ENCODE measurements at regions of chrX and their contacts with region 1.

Region 1: GRCh38 chrX:118495061-118495921 is at the start of gene DOCK11:
- DNase-seq: peak; percentile 48 to 92 (median 80)
- ATAC-seq: peak; percentile 69
- H3K4me3 ChIP-seq: peak within 1 kb of the TSS; percentile 71 to 75
- H3K4me3 Mint-ChIP-seq: peak within 1 kb of the TSS; percentile 98
- H3K27ac ChIP-seq: peak within 1 kb of the TSS; percentile 82
- H3K27ac Mint-ChIP-seq: peak within 1 kb of the TSS; percentile 99
- H3K4me1 ChIP-seq: peaks cover 31% of the 10 kb centered on the region
- H3K4me1 Mint-ChIP-seq: peaks cover 26% of the 10 kb centered on the region
- H3K27me3 ChIP-seq: no peaks in the 10 kb centered on the region
- H3K27me3 Mint-ChIP-seq: no peaks in the 10 kb centered on the region
- CTCF ChIP-seq: no peak
- total RNA-seq, gene DOCK11: 52.8 to 57.9 TPM

Region 2: GRCh38 chrX:118520216-118521206 is 25.2 kb after region 1 on chrX:
- CTCF ChIA-PET with region 1: interaction called, 4 read pairs
- POLR2A ChIA-PET with region 1: interaction called, 3 read pairs
- intact Hi-C with region 1: loop called in 1 of 2 experiments (anchors 2 kb)
- DNase-seq: no peak
- ATAC-seq: no peak
- H3K4me3 ChIP-seq: no peak overlapping the region
- H3K4me3 Mint-ChIP-seq: no peak overlapping the region
- H3K27ac ChIP-seq: peak overlapping the region in 1 of 2 experiments; percentile 30
- H3K27ac Mint-ChIP-seq: peak overlapping the region; percentile 79
- H3K4me1 ChIP-seq: peaks cover 63% of the 10 kb centered on the region
- H3K4me1 Mint-ChIP-seq: peaks cover 69% of the 10 kb centered on the region
- H3K27me3 ChIP-seq: no peaks in the 10 kb centered on the region
- H3K27me3 Mint-ChIP-seq: no peaks in the 10 kb centered on the region
- CTCF ChIP-seq: no peak

Region 3: GRCh38 chrX:118528071-118528737 is 32.9 kb after region 1 on chrX:
- CTCF ChIA-PET with region 1: interaction called, 28 read pairs
- POLR2A ChIA-PET with region 1: interaction called, 40 read pairs
- intact Hi-C with region 1: loop called in 1 of 2 experiments (anchors 1 kb)
- DNase-seq: peak; percentile 0 to 82 (median 58)
- ATAC-seq: peak; percentile 72
- H3K4me3 ChIP-seq: peak overlapping the region; percentile 21 to 56
- H3K4me3 Mint-ChIP-seq: peak overlapping the region; percentile 91
- H3K27ac ChIP-seq: peak overlapping the region; percentile 61 to 83
- H3K27ac Mint-ChIP-seq: peak overlapping the region; percentile 99
- H3K4me1 ChIP-seq: peaks cover 73% of the 10 kb centered on the region
- H3K4me1 Mint-ChIP-seq: peaks cover 75% of the 10 kb centered on the region
- H3K27me3 ChIP-seq: no peaks in the 10 kb centered on the region
- H3K27me3 Mint-ChIP-seq: no peaks in the 10 kb centered on the region
- CTCF ChIP-seq: no peak